Breast epithelium (tissue), 4 donors: ENCODE measurements at regions of chr12 and their contacts with region 1.

Region 1: DNA sequence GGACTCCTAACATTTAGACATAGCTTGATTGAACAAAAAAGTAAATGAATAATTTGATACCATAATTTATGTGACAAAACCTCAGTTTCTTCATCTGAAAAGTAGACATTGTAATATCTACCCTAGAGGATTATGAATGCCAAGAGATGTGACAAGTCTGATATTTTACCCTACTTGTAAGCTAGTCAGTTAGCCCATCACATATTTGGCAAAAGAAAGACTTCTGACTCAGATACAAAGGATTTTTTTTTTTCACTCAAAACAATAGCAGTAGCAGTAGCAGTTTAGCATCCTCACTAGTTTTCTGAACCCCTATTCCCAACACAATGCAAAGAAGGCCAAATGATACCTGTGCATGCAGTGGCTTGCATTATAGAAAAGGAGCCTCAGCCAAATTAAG is 377.3 kb upstream of the E2F7 start:
- DNase-seq: no peak
- H3K4me3 ChIP-seq: no peak overlapping the region
- H3K27ac ChIP-seq: no peak overlapping the region
- H3K4me1 ChIP-seq: no peaks in the 10 kb centered on the region
- H3K27me3 ChIP-seq: no peaks in the 10 kb centered on the region
- CTCF ChIP-seq: no peak
- POLR2A ChIP-seq: no peak

Region 2: DNA sequence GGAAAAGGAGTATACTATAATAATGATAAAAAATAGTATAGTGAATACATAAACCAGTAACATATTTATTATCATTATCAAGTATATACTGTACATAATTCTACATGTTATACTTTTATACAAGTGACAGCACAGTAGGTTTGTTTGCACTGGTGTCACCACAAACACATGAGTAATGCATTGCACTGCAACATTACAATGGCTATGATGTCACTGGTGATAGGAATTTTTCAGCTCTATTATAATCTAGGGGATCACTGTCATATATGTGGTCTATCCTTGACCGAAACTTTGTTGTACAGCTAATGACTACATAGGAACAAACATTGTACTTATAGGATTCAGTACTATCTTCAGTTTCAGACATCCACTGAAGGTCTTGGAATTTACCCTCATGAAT is 1256.1 kb after region 1 on chr12:
- intact Hi-C with region 1: loop called (anchors 5 kb)
- DNase-seq: no peak
- H3K4me3 ChIP-seq: no peak overlapping the region
- H3K27ac ChIP-seq: no peak overlapping the region
- H3K4me1 ChIP-seq: no peaks in the 10 kb centered on the region
- H3K27me3 ChIP-seq: no peaks in the 10 kb centered on the region
- CTCF ChIP-seq: no peak
- POLR2A ChIP-seq: no peak